ENCODE measurements at regions of chr2 and their contacts with region 1.

Region 1: DNA sequence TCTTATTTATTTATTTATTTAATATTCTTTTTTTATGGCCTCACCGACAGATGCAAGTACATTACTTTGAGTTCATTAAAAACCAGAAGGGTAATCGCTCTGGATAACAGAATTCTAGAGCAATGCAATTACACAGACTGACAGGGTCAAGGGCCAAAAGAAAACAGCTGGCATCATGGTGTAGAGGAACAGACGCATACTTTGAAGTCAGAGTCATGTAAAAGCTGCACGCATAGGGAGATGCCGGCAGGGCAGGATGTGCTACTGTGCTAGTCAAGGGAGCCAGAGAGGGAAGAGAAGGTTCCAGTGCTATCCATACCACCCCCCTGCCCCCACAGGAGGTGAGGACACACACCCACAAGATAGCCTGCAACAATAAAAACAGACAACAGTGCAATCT is 115.2 kb upstream of the TFCP2L1 start:
- DNase-seq: no peak
- ATAC-seq: no peak
- H3K4me3 ChIP-seq: no peak overlapping the region
- H3K27ac ChIP-seq: no peak overlapping the region
- H3K4me1 ChIP-seq: no peaks in the 10 kb centered on the region
- H3K27me3 ChIP-seq: no peaks in the 10 kb centered on the region
- CTCF ChIP-seq: no peak
- EP300 ChIP-seq: no peak
- POLR2A ChIP-seq: no peak
- RAD21 ChIP-seq: no peak

Region 2: GRCh38 chr2:121519732-121520640 is 119.8 kb after region 1 on chr2:
- CTCF ChIA-PET with region 1: no interaction called
- POLR2A ChIA-PET with region 1: no interaction called
- in situ Hi-C with region 1: no loop called
- intact Hi-C with region 1: loop called (anchors 1 kb)
- DNase-seq: no peak
- ATAC-seq: no peak
- H3K4me3 ChIP-seq: no peak overlapping the region
- H3K27ac ChIP-seq: no peak overlapping the region
- H3K4me1 ChIP-seq: peaks cover 4 to 7% of the 10 kb centered on the region in 2 experiments; a peak in 3 of 5 replicates
- H3K27me3 ChIP-seq: no peaks in the 10 kb centered on the region
- CTCF ChIP-seq: no peak
- EP300 ChIP-seq: no peak
- POLR2A ChIP-seq: no peak
- RAD21 ChIP-seq: no peak

Region 3: DNA sequence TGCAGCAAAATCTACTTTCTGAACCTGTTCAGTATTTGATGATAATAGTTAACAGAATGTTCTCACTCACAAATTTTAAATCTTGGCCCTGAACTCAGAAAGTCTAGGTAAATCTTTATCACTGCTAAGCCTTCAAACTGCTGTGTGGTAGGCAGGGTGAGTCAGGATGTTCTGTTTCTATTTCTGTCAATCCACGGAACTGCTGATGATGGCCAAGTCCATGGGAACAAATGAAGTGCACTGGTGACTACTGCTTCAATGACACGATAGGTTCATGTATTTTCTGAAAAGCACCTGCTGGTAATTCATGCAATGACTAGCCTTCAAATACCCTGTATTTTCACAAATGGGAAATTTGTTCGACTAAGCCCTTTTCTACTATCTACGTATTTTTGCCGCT is 322.3 kb after region 1 on chr2:
- CTCF ChIA-PET with region 1: interaction called, 6 read pairs
- POLR2A ChIA-PET with region 1: no interaction called
- in situ Hi-C with region 1: no loop called
- intact Hi-C with region 1: loop called (anchors 1 kb)
- DNase-seq: peak in 2 of 4 experiments; percentile 62 to 63
- ATAC-seq: peak; percentile 74
- H3K4me3 ChIP-seq: no peak overlapping the region
- H3K27ac ChIP-seq: no peak overlapping the region
- H3K4me1 ChIP-seq: peaks cover 6 to 16% of the 10 kb centered on the region in 2 experiments; a peak in 4 of 5 replicates
- H3K27me3 ChIP-seq: no peaks in the 10 kb centered on the region
- CTCF ChIP-seq: no peak
- EP300 ChIP-seq: no peak
- POLR2A ChIP-seq: no peak
- RAD21 ChIP-seq: 0 out of 4 replicates have a peak, but pooled peaks of 1 of the 2 experiments have one; percentile 21

Region 4: GRCh38 chr2:121755236-121756111 is 355.3 kb after region 1 on chr2 and contains the start of gene TSN:
- CTCF ChIA-PET with region 1: no interaction called
- POLR2A ChIA-PET with region 1: no interaction called
- in situ Hi-C with region 1: loop called (anchors 10 kb)
- intact Hi-C with region 1: no loop called
- DNase-seq: peak; percentile 93 to 100 (median 94)
- ATAC-seq: peak; percentile 99
- H3K4me3 ChIP-seq: peak within 1 kb of the TSS; percentile 96
- H3K27ac ChIP-seq: peak within 1 kb of the TSS; percentile 87
- H3K4me1 ChIP-seq: peaks cover 0 to 3% of the 10 kb centered on the region in 2 experiments; a peak in 3 of 5 replicates
- H3K27me3 ChIP-seq: no peaks in the 10 kb centered on the region
- CTCF ChIP-seq: no peak
- EP300 ChIP-seq: peak; percentile 40; the same call in 1 of the 2 replicates
- POLR2A ChIP-seq: peak; percentile 85
- RAD21 ChIP-seq: no peak
- polyA plus RNA-seq, gene TSN: 142 to 152 TPM